ENCODE measurements at regions of chr18 and their contacts with region 1.

Region 1: DNA sequence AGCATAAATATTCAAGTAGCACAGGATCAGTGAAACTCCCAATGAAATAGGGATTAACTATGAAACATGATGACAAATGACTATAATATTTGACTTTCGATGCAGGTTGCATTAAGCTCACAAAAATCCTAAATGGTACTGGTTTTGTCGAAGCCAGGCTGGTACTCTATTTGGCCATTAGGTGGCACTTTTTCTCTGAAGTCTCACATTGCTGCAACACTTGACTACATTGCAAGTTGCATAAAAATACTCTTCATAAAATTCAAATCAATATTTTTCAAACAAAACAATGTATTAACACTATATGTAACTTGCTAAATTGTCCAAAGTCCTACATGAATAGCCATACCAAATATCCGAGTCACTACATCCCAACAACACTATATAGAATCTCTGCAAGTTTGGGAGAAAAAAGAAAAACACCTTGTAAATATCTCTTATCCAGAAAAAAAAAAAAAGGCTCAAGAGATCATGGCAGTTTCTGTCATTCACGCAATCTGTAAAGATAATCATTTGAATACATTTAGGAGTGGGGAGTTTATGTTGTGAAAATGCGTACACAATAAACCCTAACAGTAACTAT is 9.5 kb downstream of the RTTN start:
- DNase-seq: no peak
- ATAC-seq: peak; percentile 45
- H3K4me3 ChIP-seq: no peak overlapping the region
- H3K27ac ChIP-seq: peak overlapping the region; percentile 95
- H3K4me1 ChIP-seq: peaks cover 30% of the 10 kb centered on the region
- H3K27me3 ChIP-seq: no peaks in the 10 kb centered on the region
- CTCF ChIP-seq: peak; percentile 64 to 71 (median 66)
- EP300 ChIP-seq: no peak
- POLR2A ChIP-seq: no peak
- RAD21 ChIP-seq: peak; percentile 66

Region 2: DNA sequence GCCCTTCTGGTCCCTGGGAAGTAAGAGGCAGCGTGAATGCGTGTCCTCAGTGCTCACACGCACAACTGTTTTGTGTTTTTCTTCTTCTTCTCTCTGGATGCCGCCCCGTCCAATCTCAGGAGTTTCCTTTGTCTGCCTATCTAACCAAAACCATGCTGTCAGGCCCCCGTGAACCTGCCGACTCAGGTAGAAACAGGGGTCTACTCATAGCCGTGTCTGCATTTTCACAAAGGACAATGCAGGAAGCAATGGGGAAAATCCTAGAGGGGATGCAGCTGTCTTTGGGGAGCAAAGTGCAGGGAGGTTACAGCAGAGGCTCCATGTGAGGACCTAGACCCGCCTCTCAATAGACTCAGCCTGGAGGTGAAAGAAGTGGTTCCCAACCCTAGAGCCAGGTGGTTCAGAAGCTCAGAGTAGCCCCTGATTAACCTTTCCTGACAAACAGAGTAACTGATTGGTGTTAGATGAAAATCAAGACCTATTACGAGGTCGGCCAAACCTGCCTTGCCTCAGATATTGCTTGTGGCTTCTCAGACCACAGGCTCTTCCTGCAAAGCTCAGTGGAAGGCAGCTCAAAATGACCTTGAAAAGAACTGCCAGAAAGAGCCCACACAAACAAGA is 297.6 kb before region 1 on chr18:
- CTCF ChIA-PET with region 1: no interaction called
- POLR2A ChIA-PET with region 1: no interaction called
- RAD21 ChIA-PET with region 1: interaction called, 3 read pairs
- SMC1A ChIA-PET with region 1: interaction called, 3 read pairs
- in situ Hi-C with region 1: no loop called
- intact Hi-C with region 1: loop called (anchors 5 kb)
- DNase-seq: no peak
- ATAC-seq: peak; percentile 63
- H3K4me3 ChIP-seq: peak overlapping the region; percentile 43; the same call in 1 of the 2 replicates
- H3K27ac ChIP-seq: peak overlapping the region; percentile 84
- H3K4me1 ChIP-seq: peaks cover 31% of the 10 kb centered on the region
- H3K27me3 ChIP-seq: no peaks in the 10 kb centered on the region
- CTCF ChIP-seq: no peak
- EP300 ChIP-seq: no peak
- POLR2A ChIP-seq: no peak
- RAD21 ChIP-seq: no peak

Region 3: DNA sequence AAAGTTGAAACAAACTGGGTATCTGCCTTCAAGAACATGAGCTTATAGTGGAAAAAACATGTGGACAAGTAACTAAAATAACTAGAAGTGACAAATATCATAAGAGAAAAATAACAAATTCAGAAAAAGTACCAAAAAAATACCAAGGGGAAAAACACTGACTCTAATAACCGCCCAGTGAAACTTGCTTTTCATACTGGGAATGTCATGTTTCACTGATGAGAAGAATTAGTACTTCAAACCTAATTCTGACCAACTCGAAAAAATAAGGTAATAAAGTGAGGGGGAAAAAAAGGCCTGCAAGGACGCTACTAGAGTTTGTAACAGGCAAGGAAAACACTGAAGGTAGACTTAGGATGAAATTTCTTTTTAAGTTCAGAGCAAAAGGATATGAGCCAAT is 74.1 kb before region 1 on chr18:
- CTCF ChIA-PET with region 1: interaction called, 4 read pairs
- POLR2A ChIA-PET with region 1: no interaction called
- RAD21 ChIA-PET with region 1: interaction called, 6 read pairs
- SMC1A ChIA-PET with region 1: interaction called, 9 read pairs
- in situ Hi-C with region 1: no loop called
- intact Hi-C with region 1: loop called (anchors 5 kb)
- DNase-seq: peak; percentile 19
- ATAC-seq: peak; percentile 74
- H3K4me3 ChIP-seq: no peak overlapping the region
- H3K27ac ChIP-seq: peak overlapping the region; percentile 6; the same call in 1 of the 2 replicates
- H3K4me1 ChIP-seq: no peaks in the 10 kb centered on the region
- H3K27me3 ChIP-seq: no peaks in the 10 kb centered on the region
- CTCF ChIP-seq: no peak
- EP300 ChIP-seq: 0 out of 4 replicates have a peak, but pooled peaks of 1 of the 2 experiments have one; percentile 14
- POLR2A ChIP-seq: no peak
- RAD21 ChIP-seq: no peak

Region 4: DNA sequence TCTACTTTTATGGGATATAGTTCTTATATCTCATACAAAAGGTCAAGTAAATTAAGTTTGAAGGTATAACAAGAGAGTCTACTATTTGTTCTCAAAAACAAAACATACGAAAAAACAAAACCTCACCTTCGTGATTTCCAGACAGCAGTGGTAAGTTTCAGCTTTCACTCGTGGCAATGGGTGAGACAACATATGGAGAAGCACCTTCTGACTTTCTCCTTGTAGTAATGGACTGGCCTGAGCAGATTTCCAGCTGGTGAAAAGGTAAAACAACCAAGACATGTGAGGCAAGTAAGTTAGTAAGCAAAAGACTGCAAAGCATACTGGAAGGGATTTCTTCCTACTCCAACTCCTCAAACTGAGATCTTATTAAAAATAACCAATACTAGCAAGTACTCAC is 30.0 kb before region 1 on chr18:
- CTCF ChIA-PET with region 1: interaction called, 42 read pairs
- POLR2A ChIA-PET with region 1: interaction called, 3 read pairs
- RAD21 ChIA-PET with region 1: interaction called, 8 read pairs
- SMC1A ChIA-PET with region 1: interaction called, 24 read pairs
- in situ Hi-C with region 1: no loop called
- intact Hi-C with region 1: no loop called
- DNase-seq: peak; percentile 36
- ATAC-seq: peak; percentile 86
- H3K4me3 ChIP-seq: no peak overlapping the region; the same call in 1 of the 2 replicates
- H3K27ac ChIP-seq: peak overlapping the region; percentile 38
- H3K4me1 ChIP-seq: 0 out of 2 replicates have a peak, but pooled peaks cover 3% of the 10 kb centered on the region
- H3K27me3 ChIP-seq: no peaks in the 10 kb centered on the region
- CTCF ChIP-seq: no peak
- EP300 ChIP-seq: no peak
- POLR2A ChIP-seq: no peak
- RAD21 ChIP-seq: no peak

Region 5: GRCh38 chr18:70182548-70182947 is 13.4 kb before region 1 on chr18:
- CTCF ChIA-PET with region 1: interaction called, 49 read pairs
- POLR2A ChIA-PET with region 1: no interaction called
- RAD21 ChIA-PET with region 1: interaction called, 21 read pairs
- SMC1A ChIA-PET with region 1: interaction called, 35 read pairs
- in situ Hi-C with region 1: no loop called
- intact Hi-C with region 1: no loop called
- DNase-seq: no peak
- ATAC-seq: no peak
- H3K4me3 ChIP-seq: no peak overlapping the region
- H3K27ac ChIP-seq: no peak overlapping the region
- H3K4me1 ChIP-seq: no peaks in the 10 kb centered on the region; the same call in 1 of the 2 replicates
- H3K27me3 ChIP-seq: no peaks in the 10 kb centered on the region
- CTCF ChIP-seq: no peak
- EP300 ChIP-seq: no peak
- POLR2A ChIP-seq: no peak
- RAD21 ChIP-seq: no peak

Region 6: DNA sequence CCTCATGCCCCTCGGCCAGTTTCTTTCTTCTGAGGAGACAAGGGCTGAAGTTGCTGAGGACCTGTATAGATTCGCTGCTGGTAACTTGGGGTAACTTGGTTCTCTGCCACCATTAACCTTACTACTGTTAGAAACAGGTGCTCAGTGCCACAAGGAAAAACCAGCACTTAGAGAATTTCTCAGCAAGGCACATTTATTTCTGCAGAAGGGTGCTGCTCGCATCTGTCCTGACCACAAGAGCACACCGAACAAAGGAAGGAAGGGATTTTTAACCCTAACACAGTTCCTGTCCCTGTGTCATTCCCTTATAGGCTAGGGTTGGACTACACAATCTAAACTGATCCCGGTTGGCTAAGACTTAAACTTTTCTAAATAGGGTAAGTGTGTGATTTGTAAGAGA is 247.0 kb after region 1 on chr18:
- CTCF ChIA-PET with region 1: interaction called, 23 read pairs
- POLR2A ChIA-PET with region 1: no interaction called
- RAD21 ChIA-PET with region 1: interaction called, 5 read pairs
- SMC1A ChIA-PET with region 1: interaction called, 6 read pairs
- in situ Hi-C with region 1: no loop called
- intact Hi-C with region 1: no loop called
- DNase-seq: no peak
- ATAC-seq: no peak
- H3K4me3 ChIP-seq: no peak overlapping the region
- H3K27ac ChIP-seq: no peak overlapping the region
- H3K4me1 ChIP-seq: no peaks in the 10 kb centered on the region
- H3K27me3 ChIP-seq: no peaks in the 10 kb centered on the region; a peak in 1 of 4 replicates
- CTCF ChIP-seq: no peak
- EP300 ChIP-seq: no peak
- POLR2A ChIP-seq: no peak
- RAD21 ChIP-seq: no peak

Measured in GM12878 (cell line).